Activated CD4-positive, alpha-beta memory T cell treated with anti-CD3 and anti-CD28 coated beads for 36 hours (primary cell): ENCODE measurements at regions of chr15 and their contacts with region 1.

Region 1: GRCh38 chr15:67085818-67086636 is 20.6 kb downstream of the SMAD3 start:
- DNase-seq: peak; percentile 70
- H3K4me3 Mint-ChIP-seq: peak overlapping the region; percentile 1
- H3K27ac Mint-ChIP-seq: peak overlapping the region; percentile 82
- H3K4me1 Mint-ChIP-seq: peaks cover 98% of the 10 kb centered on the region
- H3K27me3 Mint-ChIP-seq: no peaks in the 10 kb centered on the region

Region 2: DNA sequence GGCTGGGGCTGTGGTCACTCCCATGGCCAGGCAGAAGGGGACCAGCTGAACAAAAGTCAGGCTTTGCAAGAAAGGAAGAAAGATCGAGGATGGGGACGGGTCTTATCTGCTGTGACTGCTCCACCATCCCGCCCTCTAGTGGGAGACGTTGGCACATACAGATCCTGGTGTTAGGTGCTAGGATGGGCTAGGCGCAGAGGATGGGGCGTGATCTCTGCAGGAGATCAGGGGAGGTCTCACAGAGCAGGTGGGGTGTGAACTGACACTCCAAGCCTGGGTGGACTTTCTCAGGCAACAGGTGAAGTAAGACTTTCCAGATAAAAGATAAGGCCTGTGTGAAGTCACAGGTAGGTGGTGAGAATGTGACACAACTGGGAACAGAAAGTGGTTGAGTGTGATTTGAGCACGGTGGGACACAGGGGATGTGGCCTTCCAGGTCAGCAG is 162.6 kb before region 1 on chr15:
- CTCF ChIA-PET with region 1: no interaction called
- POLR2A ChIA-PET with region 1: no interaction called
- intact Hi-C with region 1: no loop called
- DNase-seq: peak; percentile 59
- H3K4me3 Mint-ChIP-seq: no peak overlapping the region
- H3K27ac Mint-ChIP-seq: no peak overlapping the region
- H3K4me1 Mint-ChIP-seq: peaks cover 6% of the 10 kb centered on the region
- H3K27me3 Mint-ChIP-seq: peaks cover 7% of the 10 kb centered on the region

Region 3: DNA sequence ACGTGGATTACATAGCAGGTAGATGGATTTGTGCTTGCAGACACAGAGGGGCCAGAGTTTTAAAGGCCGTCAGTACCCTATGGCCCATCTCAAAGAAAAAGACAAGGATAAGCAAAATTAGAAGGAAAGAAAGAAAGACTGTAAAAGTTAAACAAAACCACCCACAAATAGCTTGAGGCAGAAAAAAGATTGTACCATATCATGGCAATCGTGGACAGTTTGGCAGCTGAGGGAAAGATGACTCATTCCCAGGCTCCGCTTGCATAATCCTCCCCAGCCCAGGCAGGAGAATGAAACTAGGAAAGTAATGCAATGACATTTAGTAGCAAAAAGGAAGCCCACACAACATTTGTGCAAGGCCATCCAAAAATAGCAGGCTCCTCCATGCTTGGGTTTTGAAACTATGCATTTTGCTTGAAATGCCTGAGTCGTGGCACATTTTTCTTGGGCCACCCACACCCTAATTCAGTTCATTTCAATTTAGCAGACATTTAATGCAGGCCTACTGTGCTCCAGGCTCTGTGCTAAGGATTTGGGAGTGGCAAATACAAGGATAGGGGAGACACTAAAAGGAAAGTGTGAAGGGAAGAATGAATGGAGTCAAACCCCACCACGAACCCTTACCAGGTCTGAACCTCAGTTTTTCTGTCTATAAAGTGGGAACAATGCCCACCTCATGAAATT is 61.6 kb before region 1 on chr15:
- CTCF ChIA-PET with region 1: interaction called, 3 read pairs
- POLR2A ChIA-PET with region 1: interaction called, 3 read pairs
- intact Hi-C with region 1: loop called (anchors 1 kb)
- DNase-seq: peak; percentile 78
- H3K4me3 Mint-ChIP-seq: no peak overlapping the region
- H3K27ac Mint-ChIP-seq: no peak overlapping the region
- H3K4me1 Mint-ChIP-seq: peaks cover 33% of the 10 kb centered on the region
- H3K27me3 Mint-ChIP-seq: peaks cover 1% of the 10 kb centered on the region

Region 4: DNA sequence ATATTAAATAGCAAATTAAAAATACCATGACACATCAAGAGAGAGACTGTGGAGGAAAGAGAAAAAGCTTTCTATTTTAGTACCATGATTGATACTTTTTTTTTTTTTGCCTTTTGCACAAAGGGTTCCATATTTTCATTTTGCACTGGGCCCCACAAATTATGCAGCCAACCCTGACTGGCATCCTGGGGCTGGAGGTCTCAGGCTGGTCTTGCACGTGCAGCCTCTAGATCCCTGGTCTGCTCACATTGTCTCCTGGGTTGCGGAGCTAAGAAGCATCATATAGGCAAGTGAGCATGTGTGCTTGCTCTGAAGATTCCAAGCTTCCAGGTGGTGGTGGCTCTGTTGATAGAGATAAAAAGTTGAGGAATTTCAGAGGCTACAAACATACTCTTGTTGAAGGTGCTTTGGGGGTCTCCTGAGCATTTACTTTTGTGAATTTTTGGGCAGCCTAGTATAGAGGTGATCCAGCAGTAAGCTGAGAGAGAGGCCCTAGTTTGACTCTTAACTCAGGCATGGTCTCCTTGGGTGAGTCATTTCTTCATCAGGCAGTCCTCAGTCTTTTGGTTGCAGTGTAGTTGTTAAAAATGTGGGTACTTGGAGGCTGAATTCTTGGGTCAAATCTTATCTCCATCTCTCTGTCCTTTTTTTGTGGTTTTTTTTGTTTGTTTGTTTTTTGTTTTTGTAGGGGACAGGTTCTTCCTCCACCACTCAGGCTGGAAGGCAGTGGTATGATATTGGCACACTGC is 10.7 kb after region 1 on chr15:
- CTCF ChIA-PET with region 1: interaction called, 21 read pairs
- POLR2A ChIA-PET with region 1: interaction called, 117 read pairs
- intact Hi-C with region 1: loop called (anchors 1 kb)
- DNase-seq: no peak
- H3K4me3 Mint-ChIP-seq: no peak overlapping the region
- H3K27ac Mint-ChIP-seq: peak overlapping the region; percentile 90
- H3K4me1 Mint-ChIP-seq: peaks cover 74% of the 10 kb centered on the region
- H3K27me3 Mint-ChIP-seq: no peaks in the 10 kb centered on the region

Region 5: GRCh38 chr15:67134067-67134838 is 48.2 kb after region 1 on chr15:
- CTCF ChIA-PET with region 1: no interaction called
- POLR2A ChIA-PET with region 1: interaction called, 6 read pairs
- intact Hi-C with region 1: loop called (anchors 1 kb)
- DNase-seq: peak; percentile 79
- H3K4me3 Mint-ChIP-seq: peak overlapping the region; percentile 82
- H3K27ac Mint-ChIP-seq: peak overlapping the region; percentile 95
- H3K4me1 Mint-ChIP-seq: peaks cover 92% of the 10 kb centered on the region
- H3K27me3 Mint-ChIP-seq: no peaks in the 10 kb centered on the region

Region 6: GRCh38 chr15:67175643-67176071 is 89.6 kb after region 1 on chr15:
- CTCF ChIA-PET with region 1: interaction called, 4 read pairs
- POLR2A ChIA-PET with region 1: interaction called, 4 read pairs
- intact Hi-C with region 1: loop called (anchors 5 kb)
- DNase-seq: peak; percentile 77
- H3K4me3 Mint-ChIP-seq: no peak overlapping the region
- H3K27ac Mint-ChIP-seq: peak overlapping the region; percentile 79
- H3K4me1 Mint-ChIP-seq: peaks cover 65% of the 10 kb centered on the region
- H3K27me3 Mint-ChIP-seq: no peaks in the 10 kb centered on the region

Region 7: DNA sequence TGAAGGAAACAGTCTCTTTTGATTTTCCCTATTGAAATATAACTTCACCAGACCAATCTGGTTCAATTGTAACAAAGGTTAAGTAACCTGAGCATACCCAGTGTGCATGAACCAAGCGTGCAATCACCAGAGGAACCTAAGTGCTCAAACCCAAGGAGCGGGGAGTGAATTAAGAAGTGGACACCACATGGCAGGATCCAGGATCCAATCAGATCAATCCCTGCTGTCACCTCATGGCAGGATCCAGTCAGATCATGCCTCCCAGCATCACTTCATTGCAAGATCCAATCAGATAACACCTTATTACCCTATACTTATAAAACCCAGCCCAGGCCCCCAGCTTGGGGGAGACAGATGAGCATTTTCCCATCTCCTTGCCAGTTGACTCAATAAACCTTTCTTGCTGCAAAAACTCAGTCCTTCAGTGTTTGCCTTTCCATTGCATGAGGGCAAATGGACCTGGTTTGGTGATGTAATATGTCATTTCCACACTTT is 792.7 kb after region 1 on chr15:
- CTCF ChIA-PET with region 1: no interaction called
- POLR2A ChIA-PET with region 1: no interaction called
- intact Hi-C with region 1: no loop called
- DNase-seq: no peak
- H3K4me3 Mint-ChIP-seq: no peak overlapping the region
- H3K27ac Mint-ChIP-seq: no peak overlapping the region
- H3K4me1 Mint-ChIP-seq: peaks cover 8% of the 10 kb centered on the region
- H3K27me3 Mint-ChIP-seq: peaks cover 15% of the 10 kb centered on the region